Activated T-helper 1 cell treated with anti-CD3 and anti-CD28 coated beads, Interleukin-12 subunit alpha, Interleukin-12 subunit beta, Interleukin-2, Interleukin-4 antibody, amounts not matched to agents 30 ng/mL and 10 ng/mL and 1 ng/mL, durations not matched to agents 14 hours and 24 hours and 36 hours (primary cell): ENCODE measurements at regions of chr7 and their contacts with region 1.

Region 1: GRCh38 chr7:96303686-96304443 is 18.0 kb downstream of the SLC25A13 start:
- DNase-seq: no peak
- H3K4me3 Mint-ChIP-seq: peak overlapping the region; percentile 0
- H3K27ac Mint-ChIP-seq: peak overlapping the region; percentile 62
- H3K4me1 Mint-ChIP-seq: peaks cover 46% of the 10 kb centered on the region
- H3K27me3 Mint-ChIP-seq: no peaks in the 10 kb centered on the region

Region 2: GRCh38 chr7:96285579-96285978 is 18.3 kb before region 1 on chr7:
- intact Hi-C with region 1: loop called (anchors 1 kb)
- DNase-seq: peak; percentile 50
- H3K4me3 Mint-ChIP-seq: peak overlapping the region; percentile 66
- H3K27ac Mint-ChIP-seq: peak overlapping the region; percentile 93
- H3K4me1 Mint-ChIP-seq: peaks cover 51% of the 10 kb centered on the region
- H3K27me3 Mint-ChIP-seq: no peaks in the 10 kb centered on the region

Region 3: DNA sequence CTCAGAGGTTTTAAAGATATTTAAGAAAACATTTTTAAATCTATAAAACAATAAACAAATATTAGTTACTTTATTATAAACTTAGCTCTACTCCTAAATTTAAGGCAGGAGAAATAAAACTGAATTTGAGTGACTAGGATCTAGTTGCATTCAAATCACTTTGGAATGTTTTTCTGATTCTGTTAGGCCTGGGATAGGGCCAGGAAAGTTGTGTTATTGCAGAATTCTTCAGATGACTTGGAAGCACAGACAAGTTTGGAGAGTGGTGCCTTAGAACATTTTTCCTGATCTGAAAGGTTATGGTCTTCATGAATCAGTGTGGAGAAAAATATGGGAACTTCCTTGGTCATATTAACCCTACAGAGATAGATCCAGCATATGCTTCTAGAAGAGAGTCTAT is 33.7 kb after region 1 on chr7:
- intact Hi-C with region 1: no loop called
- DNase-seq: no peak
- H3K4me3 Mint-ChIP-seq: no peak overlapping the region
- H3K27ac Mint-ChIP-seq: no peak overlapping the region
- H3K4me1 Mint-ChIP-seq: no peaks in the 10 kb centered on the region
- H3K27me3 Mint-ChIP-seq: peaks cover 8% of the 10 kb centered on the region

Region 4: GRCh38 chr7:96479015-96479645 is 175.3 kb after region 1 on chr7:
- intact Hi-C with region 1: loop called (anchors 5 kb)
- DNase-seq: no peak
- H3K4me3 Mint-ChIP-seq: peak overlapping the region; percentile 46
- H3K27ac Mint-ChIP-seq: peak overlapping the region; percentile 80
- H3K4me1 Mint-ChIP-seq: peaks cover 29% of the 10 kb centered on the region
- H3K27me3 Mint-ChIP-seq: peaks cover 2% of the 10 kb centered on the region

Region 5: DNA sequence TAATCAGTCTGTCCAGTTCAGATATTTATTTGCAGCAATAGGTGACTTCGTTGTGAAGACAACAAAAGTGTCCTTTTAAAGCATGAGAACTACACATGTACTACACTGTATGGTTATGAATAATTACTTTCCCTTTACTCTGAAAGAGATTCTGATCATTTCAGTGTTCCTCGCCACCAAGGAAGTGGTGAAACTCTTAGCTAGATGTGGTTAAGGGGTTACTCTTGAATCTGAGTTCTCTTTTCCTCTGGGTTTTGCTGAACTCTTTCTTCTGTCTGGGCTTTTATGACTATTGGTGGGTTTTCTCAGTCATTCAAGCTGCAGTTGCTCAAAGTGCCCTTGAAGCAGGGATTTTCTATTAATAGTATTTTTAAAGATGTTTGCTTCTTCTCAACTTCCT is 533.7 kb after region 1 on chr7:
- intact Hi-C with region 1: loop called (anchors 1 kb)
- DNase-seq: peak; percentile 17
- H3K4me3 Mint-ChIP-seq: peak overlapping the region; percentile 57
- H3K27ac Mint-ChIP-seq: peak overlapping the region; percentile 74
- H3K4me1 Mint-ChIP-seq: peaks cover 15% of the 10 kb centered on the region
- H3K27me3 Mint-ChIP-seq: peaks cover 31% of the 10 kb centered on the region